ENCODE measurements at regions of chr9 and their contacts with region 1.

Region 1: GRCh38 chr9:85741875-85742629 is at the start of gene AGTPBP1:
- DNase-seq: peak; percentile 94 to 97 (median 97)
- H3K4me3 ChIP-seq: peak within 1 kb of the TSS; percentile 67 to 75
- H3K4me3 Mint-ChIP-seq: peak within 1 kb of the TSS; percentile 93 to 98 (median 96)
- H3K27ac ChIP-seq: peak within 1 kb of the TSS; percentile 93
- H3K27ac Mint-ChIP-seq: peak within 1 kb of the TSS; percentile 94 to 99 (median 98)
- H3K4me1 ChIP-seq: peaks cover 31% of the 10 kb centered on the region
- H3K4me1 Mint-ChIP-seq: peaks cover 22 to 39% (median 31%) of the 10 kb centered on the region in 4 donors
- H3K27me3 ChIP-seq: no peaks in the 10 kb centered on the region
- H3K27me3 Mint-ChIP-seq: peaks cover 0 to 6% of the 10 kb centered on the region in 2 donors
- total RNA-seq, gene AGTPBP1: 56.1 to 56.7 TPM

Region 2: DNA sequence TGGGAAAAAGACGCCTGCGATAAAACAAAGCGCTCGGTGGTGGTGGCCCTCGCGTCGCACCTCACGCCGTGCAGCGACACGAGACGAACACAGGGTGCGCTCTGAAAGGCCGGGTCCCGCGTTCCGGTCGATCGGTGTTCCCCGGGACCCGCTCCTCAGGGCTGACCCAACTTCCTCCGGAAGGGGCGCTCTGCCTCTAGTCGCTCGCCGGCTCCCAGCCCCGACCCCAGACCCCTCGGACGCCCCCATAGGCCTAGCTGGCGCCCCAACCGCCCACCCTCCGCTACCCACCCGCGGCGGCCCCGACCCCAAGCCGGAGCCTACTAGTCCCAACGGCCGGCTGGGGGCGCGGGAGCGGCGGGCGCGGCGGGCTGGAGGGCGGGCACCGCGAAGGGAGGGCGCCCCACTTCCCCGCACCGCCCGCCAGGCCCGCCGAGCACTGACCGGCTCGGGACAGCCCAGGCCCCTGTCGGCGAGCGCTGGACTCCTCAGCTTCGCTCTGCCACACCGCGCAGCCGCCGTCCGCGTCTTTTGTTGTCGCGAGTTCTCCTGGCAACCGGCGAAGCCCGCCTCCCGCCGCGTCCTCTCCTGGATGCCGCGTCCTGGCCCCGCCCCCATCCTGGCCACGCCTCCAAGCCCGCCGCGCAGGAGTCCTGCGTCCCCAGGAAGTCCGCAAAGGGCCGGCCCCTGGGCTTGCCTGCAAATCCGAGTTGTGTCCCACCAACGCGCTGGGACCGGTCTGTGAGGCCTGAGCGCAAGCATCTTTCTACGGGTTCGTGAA is 1820.9 kb before region 1 on chr9 and contains the start of gene KIF27:
- CTCF ChIA-PET with region 1: no interaction called
- POLR2A ChIA-PET with region 1: no interaction called
- intact Hi-C with region 1: loop called (anchors 2 kb)
- DNase-seq: peak; percentile 93 to 95 (median 94)
- H3K4me3 ChIP-seq: peak within 1 kb of the TSS; percentile 20 to 67
- H3K4me3 Mint-ChIP-seq: peak within 1 kb of the TSS; percentile 90 to 95 (median 92)
- H3K27ac ChIP-seq: peak within 1 kb of the TSS; percentile 83
- H3K27ac Mint-ChIP-seq: peak within 1 kb of the TSS; percentile 84 to 98 (median 97)
- H3K4me1 ChIP-seq: peaks cover 11% of the 10 kb centered on the region
- H3K4me1 Mint-ChIP-seq: peaks cover 8 to 18% (median 10%) of the 10 kb centered on the region in 4 donors
- H3K27me3 ChIP-seq: no peaks in the 10 kb centered on the region
- H3K27me3 Mint-ChIP-seq: no peaks in the 10 kb centered on the region
- total RNA-seq, gene KIF27: 4.7 to 5.2 TPM

Region 3: GRCh38 chr9:85716031-85716877 is 25.8 kb before region 1 on chr9:
- CTCF ChIA-PET with region 1: interaction called, 3 read pairs
- POLR2A ChIA-PET with region 1: interaction called, 10 read pairs
- intact Hi-C with region 1: no loop called
- DNase-seq: no peak
- H3K4me3 ChIP-seq: no peak overlapping the region
- H3K4me3 Mint-ChIP-seq: peak overlapping the region in 5 of 8 donors; percentile 1 to 44 (median 15)
- H3K27ac ChIP-seq: no peak overlapping the region
- H3K27ac Mint-ChIP-seq: peak overlapping the region in 6 of 7 donors; percentile 15 to 85 (median 54)
- H3K4me1 ChIP-seq: peaks cover 15% of the 10 kb centered on the region
- H3K4me1 Mint-ChIP-seq: peaks cover 37 to 61% (median 49%) of the 10 kb centered on the region in 4 donors
- H3K27me3 ChIP-seq: no peaks in the 10 kb centered on the region
- H3K27me3 Mint-ChIP-seq: no peaks in the 10 kb centered on the region

Region 4: GRCh38 chr9:85940832-85941621 is 199.0 kb after region 1 on chr9 and contains the start of gene NAA35:
- CTCF ChIA-PET with region 1: no interaction called
- POLR2A ChIA-PET with region 1: interaction called, 8 read pairs
- intact Hi-C with region 1: loop called (anchors 1 kb)
- DNase-seq: peak; percentile 99
- H3K4me3 ChIP-seq: peak within 1 kb of the TSS; percentile 43 to 73
- H3K4me3 Mint-ChIP-seq: peak within 1 kb of the TSS; percentile 85 to 95 (median 89)
- H3K27ac ChIP-seq: peak within 1 kb of the TSS; percentile 87
- H3K27ac Mint-ChIP-seq: peak within 1 kb of the TSS in 6 of 7 donors; percentile 91 to 99 (median 96)
- H3K4me1 ChIP-seq: peaks cover 45% of the 10 kb centered on the region
- H3K4me1 Mint-ChIP-seq: peaks cover 12 to 19% (median 16%) of the 10 kb centered on the region in 4 donors
- H3K27me3 ChIP-seq: no peaks in the 10 kb centered on the region
- H3K27me3 Mint-ChIP-seq: no peaks in the 10 kb centered on the region
- total RNA-seq, gene NAA35: 24.8 to 27.8 TPM

Region 5: GRCh38 chr9:85978496-85978895 is 236.4 kb after region 1 on chr9:
- CTCF ChIA-PET with region 1: no interaction called
- POLR2A ChIA-PET with region 1: no interaction called
- intact Hi-C with region 1: no loop called
- DNase-seq: no peak
- H3K4me3 ChIP-seq: no peak overlapping the region
- H3K4me3 Mint-ChIP-seq: no peak overlapping the region
- H3K27ac ChIP-seq: no peak overlapping the region
- H3K27ac Mint-ChIP-seq: no peak overlapping the region
- H3K4me1 ChIP-seq: no peaks in the 10 kb centered on the region
- H3K4me1 Mint-ChIP-seq: no peaks in the 10 kb centered on the region
- H3K27me3 ChIP-seq: no peaks in the 10 kb centered on the region
- H3K27me3 Mint-ChIP-seq: no peaks in the 10 kb centered on the region

Region 6: GRCh38 chr9:86354011-86354817 is 612.2 kb after region 1 on chr9 and contains the start of gene TUT7:
- CTCF ChIA-PET with region 1: no interaction called
- POLR2A ChIA-PET with region 1: interaction called, 4 read pairs
- intact Hi-C with region 1: loop called (anchors 1 kb)
- DNase-seq: peak; percentile 92 to 96 (median 93)
- H3K4me3 ChIP-seq: peak within 1 kb of the TSS; percentile 69 to 75
- H3K4me3 Mint-ChIP-seq: peak within 1 kb of the TSS; percentile 91 to 98 (median 97)
- H3K27ac ChIP-seq: peak within 1 kb of the TSS; percentile 84
- H3K27ac Mint-ChIP-seq: peak within 1 kb of the TSS; percentile 85 to 99 (median 97)
- H3K4me1 ChIP-seq: peaks cover 46% of the 10 kb centered on the region
- H3K4me1 Mint-ChIP-seq: peaks cover 23 to 60% (median 43%) of the 10 kb centered on the region in 4 donors
- H3K27me3 ChIP-seq: no peaks in the 10 kb centered on the region
- H3K27me3 Mint-ChIP-seq: no peaks in the 10 kb centered on the region
- total RNA-seq, gene TUT7: 60.2 to 64.1 TPM